ENCODE measurements at regions of chr20 and their contacts with region 1.

Region 1: GRCh38 chr20:46681032-46681854 is 8.0 kb downstream of the TP53RK start:
- H3K4me3 Mint-ChIP-seq: no peak overlapping the region
- H3K27ac Mint-ChIP-seq: no peak overlapping the region
- H3K4me1 Mint-ChIP-seq: peaks cover 38% of the 10 kb centered on the region
- H3K27me3 Mint-ChIP-seq: peaks cover 1% of the 10 kb centered on the region

Region 2: DNA sequence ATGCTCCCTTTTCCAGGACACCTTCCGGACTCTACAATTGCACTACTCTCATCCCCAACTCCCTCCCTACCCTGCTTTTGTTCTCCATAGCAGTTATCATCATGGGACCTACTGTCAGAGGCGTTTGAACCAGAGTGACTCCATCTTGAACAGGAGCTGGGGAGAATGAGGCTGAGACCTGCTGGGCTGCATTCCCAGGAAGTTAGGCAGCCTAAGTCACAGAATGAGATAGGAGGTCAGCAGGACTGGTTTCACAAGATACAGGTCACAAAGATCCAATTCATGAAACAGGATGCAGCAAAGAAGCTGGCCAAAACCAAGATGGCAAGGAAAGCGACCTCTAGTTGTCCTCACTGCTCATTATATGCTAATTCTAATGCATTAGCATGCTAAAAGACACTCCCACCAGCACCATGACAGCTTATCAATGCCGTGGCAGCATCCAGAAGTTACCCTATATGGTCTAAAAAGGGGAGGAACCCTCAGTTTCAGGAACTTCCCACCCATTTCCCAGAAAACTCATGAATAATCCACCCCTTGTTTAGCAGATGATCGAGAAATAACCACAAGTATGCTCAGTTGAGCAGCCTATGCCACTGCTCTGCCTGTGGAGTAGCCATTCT is 45.6 kb before region 1 on chr20:
- intact Hi-C with region 1: loop called (anchors 2 kb)
- H3K4me3 Mint-ChIP-seq: no peak overlapping the region
- H3K27ac Mint-ChIP-seq: no peak overlapping the region
- H3K4me1 Mint-ChIP-seq: peaks cover 24% of the 10 kb centered on the region
- H3K27me3 Mint-ChIP-seq: peaks cover 42% of the 10 kb centered on the region